Activated CD4-positive, alpha-beta T cell treated with anti-CD3 and anti-CD28 coated beads for 36 hours (primary cell): ENCODE measurements at regions of chr6 and their contacts with region 1.

Region 1: GRCh38 chr6:53294095-53294494 is 54.7 kb downstream of the ELOVL5 start:
- DNase-seq: no peak
- ATAC-seq: no peak
- H3K4me3 Mint-ChIP-seq: no peak overlapping the region
- H3K27ac Mint-ChIP-seq: peak overlapping the region; percentile 18
- H3K4me1 Mint-ChIP-seq: peaks cover 78% of the 10 kb centered on the region
- H3K27me3 Mint-ChIP-seq: no peaks in the 10 kb centered on the region

Region 2: DNA sequence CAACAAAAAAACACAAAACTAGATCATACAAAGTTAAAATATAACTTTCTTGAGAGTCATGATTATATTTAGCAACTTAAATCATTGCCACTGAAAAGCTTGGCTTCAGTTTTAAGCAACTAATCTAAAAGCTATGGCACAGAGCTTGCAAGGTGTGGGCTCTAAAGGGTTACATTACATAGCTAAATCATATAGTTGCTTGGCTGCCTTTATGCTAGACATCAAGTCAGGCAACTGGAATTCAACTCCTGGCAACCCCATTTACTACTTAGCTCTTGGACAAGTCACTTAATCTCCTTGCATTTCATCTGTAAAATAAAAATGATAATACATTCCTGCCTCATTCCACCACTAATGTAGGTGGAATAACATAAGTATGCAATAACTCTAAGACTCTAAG is 104.5 kb before region 1 on chr6:
- CTCF ChIA-PET with region 1: no interaction called
- POLR2A ChIA-PET with region 1: no interaction called
- intact Hi-C with region 1: loop called in 1 of 2 experiments (anchors 5 kb)
- DNase-seq: no peak
- ATAC-seq: no peak
- H3K4me3 Mint-ChIP-seq: no peak overlapping the region
- H3K27ac Mint-ChIP-seq: no peak overlapping the region
- H3K4me1 Mint-ChIP-seq: peaks cover 15% of the 10 kb centered on the region
- H3K27me3 Mint-ChIP-seq: no peaks in the 10 kb centered on the region

Region 3: GRCh38 chr6:53410508-53411258 is 116.6 kb after region 1 on chr6:
- CTCF ChIA-PET with region 1: interaction called, 3 read pairs
- POLR2A ChIA-PET with region 1: no interaction called
- intact Hi-C with region 1: loop called in 1 of 2 experiments (anchors 5 kb)
- DNase-seq: peak; percentile 74
- ATAC-seq: peak; percentile 94
- H3K4me3 Mint-ChIP-seq: no peak overlapping the region
- H3K27ac Mint-ChIP-seq: no peak overlapping the region
- H3K4me1 Mint-ChIP-seq: no peaks in the 10 kb centered on the region
- H3K27me3 Mint-ChIP-seq: no peaks in the 10 kb centered on the region